HEK293T (cell line): ENCODE measurements at regions of chr7 and their contacts with region 1.

Region 1: DNA sequence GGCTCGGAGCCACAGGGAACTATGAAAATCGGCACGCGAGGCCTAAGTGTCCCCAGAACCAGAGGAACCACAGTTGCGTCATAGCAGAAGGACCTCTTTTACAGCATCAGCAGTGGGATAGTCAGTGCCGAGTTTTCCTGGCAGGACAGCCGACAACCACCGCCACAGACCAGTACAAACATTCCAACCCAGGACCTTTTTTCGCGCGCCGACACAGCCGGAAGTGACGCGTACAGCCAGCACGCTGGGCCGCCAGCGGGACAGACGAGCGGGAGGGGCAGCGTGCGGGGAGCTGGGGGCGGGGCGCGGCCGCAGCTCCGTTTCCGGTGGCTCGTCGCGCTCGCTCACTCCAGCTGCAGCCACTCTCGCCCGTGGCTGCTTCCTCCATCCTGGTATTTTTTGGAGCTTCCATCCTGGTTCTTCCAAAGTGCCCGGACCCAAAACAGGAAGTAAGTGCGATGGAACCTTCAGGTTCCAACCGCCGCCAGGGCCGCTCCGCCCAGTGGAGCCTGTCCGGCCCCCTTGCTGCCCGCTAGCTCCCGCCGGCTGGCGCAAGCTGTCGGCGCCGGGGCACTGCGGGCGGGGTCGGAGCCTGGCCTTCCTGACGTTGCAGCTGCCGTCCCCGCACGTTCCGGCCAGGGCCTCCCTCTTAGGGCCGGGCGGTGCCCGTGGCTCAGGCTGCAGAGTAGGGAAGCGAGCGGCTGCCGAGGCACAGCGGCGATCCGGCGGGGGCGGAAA is at the start of gene DMTF1:
- DNase-seq: peak; percentile 93

Region 2: DNA sequence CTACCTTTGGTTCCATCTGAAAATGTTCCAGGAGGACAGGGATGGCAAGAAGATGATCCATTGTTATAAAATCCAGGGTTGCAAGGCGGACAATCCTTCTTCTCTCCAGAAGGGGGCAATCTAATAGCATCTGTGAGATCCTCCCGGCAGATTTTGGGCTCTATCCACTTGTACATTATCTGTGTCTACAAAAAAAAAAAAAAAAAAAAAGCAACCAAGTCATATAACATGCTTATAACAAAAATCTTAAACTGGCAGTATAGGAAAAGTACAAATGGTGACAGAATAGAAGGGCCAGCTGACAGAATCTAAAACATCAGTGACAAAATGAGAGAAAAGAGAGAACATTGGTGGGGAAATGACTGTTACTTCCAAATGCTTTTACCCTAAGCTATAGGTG is 225.5 kb before region 1 on chr7:
- CTCF ChIA-PET with region 1: interaction called, 21 read pairs
- POLR2A ChIA-PET with region 1: interaction called, 12 read pairs
- DNase-seq: peak; percentile 51

Region 3: GRCh38 chr7:87059525-87060287 is 92.6 kb before region 1 on chr7 and contains the start of gene ELAPOR2:
- CTCF ChIA-PET with region 1: interaction called, 11 read pairs
- POLR2A ChIA-PET with region 1: interaction called, 25 read pairs
- DNase-seq: peak; percentile 88

Region 4: GRCh38 chr7:87129848-87130247 is 22.4 kb before region 1 on chr7:
- CTCF ChIA-PET with region 1: interaction called, 8 read pairs
- POLR2A ChIA-PET with region 1: interaction called, 18 read pairs
- DNase-seq: no peak

Region 5: GRCh38 chr7:87188930-87189329 is 36.7 kb after region 1 on chr7:
- CTCF ChIA-PET with region 1: no interaction called
- POLR2A ChIA-PET with region 1: interaction called, 10 read pairs
- DNase-seq: no peak

Region 6: GRCh38 chr7:87213811-87214210 is 61.5 kb after region 1 on chr7:
- CTCF ChIA-PET with region 1: interaction called, 3 read pairs
- POLR2A ChIA-PET with region 1: interaction called, 29 read pairs
- DNase-seq: no peak

Region 7: DNA sequence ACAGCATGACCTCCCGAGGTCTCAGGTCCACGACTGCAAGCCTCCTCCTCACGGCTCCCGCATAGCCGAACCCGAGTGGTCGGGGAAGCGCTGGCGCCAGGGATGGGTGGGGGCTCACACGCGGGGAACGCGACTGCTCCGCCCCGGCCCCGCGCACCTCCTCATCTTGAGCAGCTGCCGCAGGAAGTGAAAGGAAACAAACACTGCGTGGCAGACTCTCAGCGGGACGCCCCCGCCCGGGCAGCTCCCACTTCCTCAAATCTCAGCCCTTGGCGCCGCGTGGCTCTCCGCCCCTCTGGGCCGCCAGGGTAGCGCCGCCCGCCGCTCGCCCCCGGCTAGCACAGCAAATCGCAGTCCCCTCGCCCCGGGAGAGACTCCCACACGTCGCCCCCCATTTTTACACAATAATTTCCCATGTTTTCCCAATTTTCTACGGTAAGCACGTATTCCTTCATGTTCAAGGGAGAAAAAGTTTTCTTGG is 67.3 kb after region 1 on chr7 and contains the start of gene TMEM243:
- CTCF ChIA-PET with region 1: interaction called, 4 read pairs
- POLR2A ChIA-PET with region 1: interaction called, 29 read pairs
- DNase-seq: peak; percentile 64